MCF 10A (cell line): ENCODE measurements at regions of chr1 and their contacts with region 1.

Region 1: GRCh38 chr1:3624200-3625136 is at the start of gene TPRG1L:
- DNase-seq: peak; percentile 96
- H3K4me3 Mint-ChIP-seq: peak within 1 kb of the TSS; percentile 98
- H3K27ac Mint-ChIP-seq: peak within 1 kb of the TSS; percentile 87
- H3K4me1 Mint-ChIP-seq: peaks cover 33% of the 10 kb centered on the region
- H3K27me3 Mint-ChIP-seq: no peaks in the 10 kb centered on the region
- CTCF ChIP-seq: no peak
- total RNA-seq, gene TPRG1L: 21.9 and 29.7 TPM in 2 replicates

Region 2: GRCh38 chr1:3453203-3453761 is 171.2 kb before region 1 on chr1:
- CTCF ChIA-PET with region 1: interaction called, 5 read pairs
- POLR2A ChIA-PET with region 1: interaction called, 10 read pairs
- intact Hi-C with region 1: loop called (anchors 1 kb)
- DNase-seq: peak; percentile 78
- H3K4me3 Mint-ChIP-seq: peak overlapping the region; percentile 76
- H3K27ac Mint-ChIP-seq: no peak overlapping the region
- H3K4me1 Mint-ChIP-seq: no peaks in the 10 kb centered on the region
- H3K27me3 Mint-ChIP-seq: peaks cover 19% of the 10 kb centered on the region
- CTCF ChIP-seq: peak; percentile 97

Region 3: DNA sequence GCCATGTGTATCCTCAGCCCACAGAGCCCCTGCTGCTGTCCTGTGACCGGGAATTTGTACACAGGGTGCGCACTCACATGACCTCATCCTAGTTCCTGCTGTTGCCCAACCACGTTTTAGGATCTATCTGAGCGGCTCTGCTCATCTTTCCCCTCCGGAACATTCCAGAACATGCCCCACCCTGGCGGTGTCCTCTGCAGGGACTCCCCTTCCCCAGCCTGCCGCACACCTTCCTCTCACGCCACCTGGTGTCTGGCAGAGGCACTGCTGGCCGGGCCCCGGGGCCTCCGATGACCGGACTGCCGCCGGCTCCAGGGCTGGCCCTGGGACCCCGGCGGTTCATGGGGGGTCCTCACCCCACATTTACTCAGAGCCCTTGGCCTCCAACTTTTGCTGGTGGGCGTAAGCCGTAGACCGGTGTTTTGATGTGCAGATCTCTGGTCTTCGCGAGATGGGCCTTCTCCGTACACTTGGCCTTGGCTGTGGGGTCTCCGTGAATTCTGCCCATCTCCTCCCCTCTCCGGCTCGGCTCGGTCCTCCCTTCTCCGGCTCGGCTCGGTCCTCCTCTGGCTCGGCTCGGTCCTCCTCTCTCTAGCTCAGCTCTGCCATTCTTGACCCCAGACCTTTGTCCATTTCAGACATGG is 140.5 kb before region 1 on chr1:
- CTCF ChIA-PET with region 1: interaction called, 69 read pairs
- POLR2A ChIA-PET with region 1: interaction called, 5 read pairs
- intact Hi-C with region 1: no loop called
- DNase-seq: peak; percentile 72
- H3K4me3 Mint-ChIP-seq: peak overlapping the region; percentile 33
- H3K27ac Mint-ChIP-seq: peak overlapping the region; percentile 79
- H3K4me1 Mint-ChIP-seq: peaks cover 10% of the 10 kb centered on the region
- H3K27me3 Mint-ChIP-seq: no peaks in the 10 kb centered on the region
- CTCF ChIP-seq: peak; percentile 97

Region 4: GRCh38 chr1:3491291-3492246 is 132.9 kb before region 1 on chr1:
- CTCF ChIA-PET with region 1: interaction called, 84 read pairs
- POLR2A ChIA-PET with region 1: interaction called, 5 read pairs
- intact Hi-C with region 1: loop called (anchors 1 kb)
- DNase-seq: peak; percentile 66
- H3K4me3 Mint-ChIP-seq: no peak overlapping the region
- H3K27ac Mint-ChIP-seq: no peak overlapping the region
- H3K4me1 Mint-ChIP-seq: no peaks in the 10 kb centered on the region
- H3K27me3 Mint-ChIP-seq: no peaks in the 10 kb centered on the region
- CTCF ChIP-seq: peak; percentile 99

Region 5: DNA sequence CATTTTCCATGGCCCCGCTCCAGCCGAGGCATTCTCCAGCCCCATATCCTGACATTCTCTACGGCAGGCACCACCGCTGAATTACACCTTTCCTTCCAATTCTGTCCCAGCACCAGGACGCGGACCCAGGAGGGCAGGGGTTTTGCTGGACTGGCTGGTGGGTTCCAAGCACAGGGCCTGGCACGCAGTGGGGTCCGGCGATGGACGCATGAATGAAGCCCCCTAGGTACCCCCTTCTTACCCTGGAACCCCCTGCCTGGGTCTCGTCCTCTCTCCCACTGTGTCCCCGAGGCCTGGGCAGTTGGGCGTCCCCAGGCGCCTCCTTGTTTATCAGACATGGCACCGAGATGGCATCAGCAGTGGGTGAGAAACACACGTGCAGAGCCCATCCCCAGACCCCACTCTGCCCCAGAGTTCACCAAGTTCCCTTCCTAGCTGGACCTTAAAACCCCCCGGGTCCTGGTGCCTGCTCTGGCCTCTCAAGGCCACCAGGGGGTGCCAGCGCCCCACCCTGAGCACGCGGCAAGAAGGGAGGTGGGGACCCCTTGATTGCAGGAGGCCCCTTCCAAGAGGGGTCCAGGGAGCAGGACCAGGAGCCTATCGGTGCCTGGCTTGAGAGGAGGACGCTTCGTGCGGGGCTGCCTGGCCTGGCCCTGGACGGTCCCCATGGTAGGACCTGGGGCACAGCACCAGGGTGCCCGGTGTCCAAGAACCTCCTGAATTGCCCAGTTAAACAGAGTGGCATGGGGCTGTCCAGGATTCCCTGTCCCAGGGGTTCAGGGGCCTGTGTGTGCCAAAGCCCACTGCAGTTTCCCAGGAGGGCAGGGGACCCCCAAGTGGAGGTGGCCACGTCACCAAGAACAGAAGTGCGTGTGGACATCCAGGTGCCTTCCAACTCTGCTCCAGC is 59.3 kb before region 1 on chr1:
- CTCF ChIA-PET with region 1: interaction called, 57 read pairs
- POLR2A ChIA-PET with region 1: interaction called, 4 read pairs
- intact Hi-C with region 1: loop called (anchors 1 kb)
- DNase-seq: peak; percentile 38
- H3K4me3 Mint-ChIP-seq: no peak overlapping the region
- H3K27ac Mint-ChIP-seq: no peak overlapping the region
- H3K4me1 Mint-ChIP-seq: peaks cover 7% of the 10 kb centered on the region
- H3K27me3 Mint-ChIP-seq: peaks cover 11% of the 10 kb centered on the region
- CTCF ChIP-seq: peak; percentile 97

Region 6: GRCh38 chr1:3796215-3797061 is 172.0 kb after region 1 on chr1 and contains the start of gene LRRC47:
- CTCF ChIA-PET with region 1: interaction called, 3 read pairs
- POLR2A ChIA-PET with region 1: interaction called, 3 read pairs
- intact Hi-C with region 1: loop called (anchors 5 kb)
- DNase-seq: peak; percentile 92
- H3K4me3 Mint-ChIP-seq: peak within 1 kb of the TSS; percentile 94
- H3K27ac Mint-ChIP-seq: peak within 1 kb of the TSS; percentile 89
- H3K4me1 Mint-ChIP-seq: peaks cover 19% of the 10 kb centered on the region
- H3K27me3 Mint-ChIP-seq: peaks cover 5% of the 10 kb centered on the region
- CTCF ChIP-seq: no peak
- total RNA-seq, gene LRRC47: 46.1 and 53.0 TPM in 2 replicates

Region 7: DNA sequence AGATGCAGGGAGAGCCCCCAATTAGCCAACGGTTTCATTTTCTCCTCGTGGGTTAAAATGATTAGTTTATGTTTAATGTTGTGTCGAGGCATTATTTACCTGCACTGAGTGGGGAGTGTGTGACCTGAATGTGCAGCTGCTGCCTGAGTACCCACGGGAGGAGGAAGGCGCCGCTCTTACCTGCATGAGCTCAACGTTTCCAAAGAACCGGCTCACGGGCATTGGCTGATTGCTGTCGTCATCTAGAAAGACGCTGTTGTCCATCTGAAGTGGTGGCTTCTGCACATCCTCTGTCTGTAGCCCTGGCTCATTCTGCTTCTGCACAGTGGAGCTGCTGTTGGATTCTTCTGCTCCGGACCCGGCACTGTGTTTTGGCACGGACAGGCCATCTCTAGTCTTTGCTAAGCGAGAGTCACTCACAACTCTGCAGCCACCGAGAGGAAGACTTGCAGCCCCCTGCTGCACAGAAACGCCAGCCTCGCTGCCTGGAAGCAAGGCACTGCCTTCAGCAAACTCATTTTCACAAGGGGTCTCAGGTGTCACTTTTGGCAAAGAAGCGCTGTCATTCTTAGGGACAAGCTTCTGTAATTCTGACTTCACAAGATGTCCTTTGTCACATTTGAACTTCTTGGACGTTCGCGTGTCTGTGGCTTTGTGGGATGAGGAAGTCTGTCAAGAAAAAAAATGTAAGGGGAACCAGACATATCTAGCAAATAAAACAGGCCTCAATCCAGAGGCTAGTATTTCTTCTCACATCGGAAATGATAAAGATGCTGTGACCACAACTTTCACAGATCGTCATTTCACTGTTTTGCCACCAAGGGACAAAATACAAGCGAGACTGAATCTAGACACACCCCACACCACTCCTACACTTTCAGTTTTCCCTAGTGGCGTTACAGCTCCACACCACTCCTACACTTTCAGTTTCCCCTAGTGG is 266.2 kb after region 1 on chr1:
- CTCF ChIA-PET with region 1: no interaction called
- POLR2A ChIA-PET with region 1: no interaction called
- intact Hi-C with region 1: no loop called
- DNase-seq: no peak
- H3K4me3 Mint-ChIP-seq: no peak overlapping the region
- H3K27ac Mint-ChIP-seq: no peak overlapping the region
- H3K4me1 Mint-ChIP-seq: no peaks in the 10 kb centered on the region
- H3K27me3 Mint-ChIP-seq: no peaks in the 10 kb centered on the region
- CTCF ChIP-seq: no peak